ENCODE measurements at regions of chr7 and their contacts with region 1.

Region 1: GRCh38 chr7:24819916-24820689 is 62.8 kb upstream of the GSDME start:
- DNase-seq: peak; percentile 33 to 72 (median 68)
- ATAC-seq: peak; percentile 58
- H3K4me3 ChIP-seq: peak overlapping the region; percentile 24
- H3K4me3 Mint-ChIP-seq: peak overlapping the region; percentile 70 to 93 (median 83)
- H3K27ac ChIP-seq: peak overlapping the region; percentile 70
- H3K27ac Mint-ChIP-seq: peak overlapping the region; percentile 91 to 99 (median 94)
- H3K4me1 ChIP-seq: peaks cover 27 to 28% of the 10 kb centered on the region in 2 donors
- H3K4me1 Mint-ChIP-seq: peaks cover 13 to 47% (median 45%) of the 10 kb centered on the region in 7 donors
- H3K27me3 ChIP-seq: no peaks in the 10 kb centered on the region
- H3K27me3 Mint-ChIP-seq: no peaks in the 10 kb centered on the region

Region 2: GRCh38 chr7:24836084-24836483 is 16.0 kb after region 1 on chr7:
- CTCF ChIA-PET with region 1: interaction called, 14 read pairs
- POLR2A ChIA-PET with region 1: interaction called, 9 read pairs
- intact Hi-C with region 1: loop called (anchors 1 to 2 kb)
- DNase-seq: peak in 1 of 9 donors; percentile 4
- ATAC-seq: peak; percentile 59
- H3K4me3 ChIP-seq: no peak overlapping the region
- H3K4me3 Mint-ChIP-seq: peak overlapping the region in 4 of 10 donors; percentile 4 to 62 (median 24)
- H3K27ac ChIP-seq: no peak overlapping the region
- H3K27ac Mint-ChIP-seq: peak overlapping the region in 3 of 9 donors; percentile 16 to 58 (median 41)
- H3K4me1 ChIP-seq: peaks cover 4 to 19% of the 10 kb centered on the region in 2 donors
- H3K4me1 Mint-ChIP-seq: peaks cover 14 to 56% (median 21%) of the 10 kb centered on the region in 7 donors
- H3K27me3 ChIP-seq: no peaks in the 10 kb centered on the region
- H3K27me3 Mint-ChIP-seq: no peaks in the 10 kb centered on the region

Region 3: GRCh38 chr7:24907311-24907886 is 87.3 kb after region 1 on chr7:
- CTCF ChIA-PET with region 1: no interaction called
- POLR2A ChIA-PET with region 1: interaction called, 4 read pairs
- intact Hi-C with region 1: loop called (anchors 1 kb)
- DNase-seq: peak in 1 of 9 donors; percentile 49
- ATAC-seq: peak; percentile 56
- H3K4me3 ChIP-seq: peak overlapping the region; percentile 8
- H3K4me3 Mint-ChIP-seq: no peak overlapping the region
- H3K27ac ChIP-seq: no peak overlapping the region
- H3K27ac Mint-ChIP-seq: no peak overlapping the region
- H3K4me1 ChIP-seq: peaks cover 33 to 84% of the 10 kb centered on the region in 2 donors
- H3K4me1 Mint-ChIP-seq: peaks cover 26 to 47% (median 29%) of the 10 kb centered on the region in 7 donors
- H3K27me3 ChIP-seq: no peaks in the 10 kb centered on the region
- H3K27me3 Mint-ChIP-seq: no peaks in the 10 kb centered on the region

Region 4: DNA sequence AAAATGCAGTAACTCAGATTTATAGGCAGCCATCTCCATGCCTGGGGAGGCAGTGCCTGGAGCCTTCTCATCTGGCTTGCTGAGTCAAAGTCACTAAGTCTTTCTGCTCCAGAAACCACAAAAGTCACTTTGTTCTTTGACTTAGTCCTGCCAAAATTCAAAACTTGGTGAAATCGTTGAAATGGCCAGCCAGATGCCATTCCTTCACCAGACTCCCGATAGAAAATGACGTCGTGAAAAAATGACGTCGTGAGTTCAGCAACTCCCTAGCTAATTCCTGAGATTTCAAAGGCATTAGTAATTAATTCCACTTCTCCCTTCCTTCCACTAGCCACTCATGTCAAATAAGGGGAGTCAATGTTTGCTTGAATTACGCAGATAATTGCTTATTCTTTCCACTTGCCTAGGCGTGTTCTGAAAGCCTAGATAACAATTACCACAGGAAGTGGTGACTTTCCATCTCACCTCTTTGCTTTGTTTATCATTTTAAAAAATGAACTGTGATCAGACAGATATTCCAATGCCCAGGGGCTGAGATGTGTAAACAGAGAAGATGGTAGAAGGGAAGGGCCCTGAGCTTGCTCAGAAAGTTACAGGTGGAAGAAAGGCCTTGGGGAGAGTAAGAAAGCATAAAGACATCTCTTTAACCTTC is 208.4 kb after region 1 on chr7:
- CTCF ChIA-PET with region 1: interaction called, 6 read pairs
- POLR2A ChIA-PET with region 1: no interaction called
- intact Hi-C with region 1: loop called (anchors 1 kb)
- DNase-seq: peak in 8 of 9 donors; percentile 10 to 64 (median 48)
- ATAC-seq: peak; percentile 75
- H3K4me3 ChIP-seq: peak overlapping the region; percentile 17
- H3K4me3 Mint-ChIP-seq: peak overlapping the region in 9 of 10 donors; percentile 10 to 88 (median 67)
- H3K27ac ChIP-seq: peak overlapping the region; percentile 25
- H3K27ac Mint-ChIP-seq: peak overlapping the region; percentile 66 to 93 (median 89)
- H3K4me1 ChIP-seq: peaks cover 23 to 32% of the 10 kb centered on the region in 2 donors
- H3K4me1 Mint-ChIP-seq: peaks cover 21 to 40% (median 27%) of the 10 kb centered on the region in 7 donors
- H3K27me3 ChIP-seq: no peaks in the 10 kb centered on the region
- H3K27me3 Mint-ChIP-seq: peaks cover 0 to 11% (median 0%) of the 10 kb centered on the region in 5 donors

Region 5: GRCh38 chr7:25098096-25099046 is 278.3 kb after region 1 on chr7:
- CTCF ChIA-PET with region 1: interaction called, 33 read pairs
- POLR2A ChIA-PET with region 1: interaction called, 3 read pairs
- intact Hi-C with region 1: loop called (anchors 1 kb)
- DNase-seq: peak in 8 of 9 donors; percentile 26 to 53 (median 44)
- ATAC-seq: peak; percentile 93
- H3K4me3 ChIP-seq: no peak overlapping the region
- H3K4me3 Mint-ChIP-seq: no peak overlapping the region
- H3K27ac ChIP-seq: no peak overlapping the region
- H3K27ac Mint-ChIP-seq: no peak overlapping the region
- H3K4me1 ChIP-seq: no peaks in the 10 kb centered on the region
- H3K4me1 Mint-ChIP-seq: peaks cover 0 to 14% (median 6%) of the 10 kb centered on the region in 7 donors
- H3K27me3 ChIP-seq: no peaks in the 10 kb centered on the region
- H3K27me3 Mint-ChIP-seq: peaks cover 0 to 18% (median 0%) of the 10 kb centered on the region in 5 donors

Region 6: DNA sequence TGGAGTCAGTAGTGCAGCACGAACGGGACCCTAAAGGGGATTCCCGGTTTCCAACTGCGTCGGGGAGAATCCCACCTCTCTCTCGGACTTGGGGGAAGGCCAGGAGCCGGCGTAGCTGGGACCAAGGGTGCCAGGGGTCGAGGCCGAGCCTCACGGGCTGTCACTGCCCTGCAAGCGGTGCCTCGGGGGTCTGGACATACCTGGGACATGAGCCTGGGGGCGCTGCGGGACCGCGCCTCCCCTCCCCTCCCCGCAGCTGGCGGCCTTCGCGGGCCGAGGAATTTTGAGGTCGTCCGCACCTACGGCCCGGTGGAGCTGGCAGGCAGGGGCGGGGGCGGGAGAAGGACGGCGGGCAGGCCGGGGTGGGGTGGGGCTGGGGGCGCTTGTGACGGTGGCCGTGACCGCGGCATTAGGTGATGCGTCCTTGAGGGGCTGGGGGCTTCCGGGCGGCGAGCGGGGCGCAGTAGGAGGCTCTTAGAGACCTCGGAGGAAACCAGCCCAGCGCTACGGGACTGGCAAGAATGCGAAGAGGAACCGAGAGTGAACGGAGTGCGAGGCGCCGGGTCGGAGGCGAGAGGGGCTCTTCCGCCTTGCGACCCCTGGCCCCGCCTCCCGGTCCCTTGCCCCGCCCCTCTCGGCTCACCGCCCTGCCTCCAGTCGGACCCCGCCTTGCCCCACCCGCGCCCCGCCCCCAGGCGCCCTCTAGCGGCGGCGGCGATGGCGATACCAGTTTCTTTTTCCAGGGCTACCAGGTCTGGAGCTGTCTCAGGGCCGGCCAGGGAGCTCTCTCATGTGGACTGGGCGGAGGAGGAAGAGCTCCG is 359.9 kb after region 1 on chr7:
- CTCF ChIA-PET with region 1: no interaction called
- POLR2A ChIA-PET with region 1: no interaction called
- intact Hi-C with region 1: loop called in 1 of 2 experiments (anchors 1 kb)
- DNase-seq: peak; percentile 88 to 99 (median 94)
- ATAC-seq: peak; percentile 99
- H3K4me3 ChIP-seq: peak overlapping the region; percentile 75
- H3K4me3 Mint-ChIP-seq: peak overlapping the region; percentile 82 to 93 (median 88)
- H3K27ac ChIP-seq: peak overlapping the region; percentile 86
- H3K27ac Mint-ChIP-seq: peak overlapping the region; percentile 83 to 96 (median 92)
- H3K4me1 ChIP-seq: peaks cover 6 to 7% of the 10 kb centered on the region in 2 donors
- H3K4me1 Mint-ChIP-seq: peaks cover 13 to 31% (median 22%) of the 10 kb centered on the region in 7 donors
- H3K27me3 ChIP-seq: no peaks in the 10 kb centered on the region
- H3K27me3 Mint-ChIP-seq: peaks cover 0 to 12% (median 0%) of the 10 kb centered on the region in 5 donors